ENCODE measurements at regions of chr17 and their contacts with region 1.

Region 1: DNA sequence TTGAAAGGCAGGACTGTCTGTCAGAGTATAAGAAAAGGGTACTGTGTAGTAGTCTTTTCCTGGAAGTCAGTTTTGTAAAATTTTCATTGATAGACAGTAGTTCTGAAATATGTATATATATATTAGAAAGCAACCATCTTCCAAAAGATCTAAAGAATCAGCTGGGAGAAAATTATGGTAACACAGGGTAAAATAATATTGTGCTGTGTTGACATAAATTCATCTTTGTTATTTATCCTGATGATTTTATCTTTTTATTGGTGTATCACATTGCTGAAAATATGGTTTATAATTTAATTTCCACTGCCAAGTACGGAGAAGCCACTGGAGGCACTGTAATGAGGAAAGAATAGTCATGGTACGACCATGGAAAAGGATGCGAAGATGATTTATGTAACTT is 324.9 kb downstream of the CA10 start:
- DNase-seq: no peak
- H3K4me3 ChIP-seq: no peak overlapping the region
- H3K27ac ChIP-seq: no peak overlapping the region
- H3K4me1 ChIP-seq: no peaks in the 10 kb centered on the region
- H3K27me3 ChIP-seq: no peaks in the 10 kb centered on the region
- CTCF ChIP-seq: no peak

Region 2: DNA sequence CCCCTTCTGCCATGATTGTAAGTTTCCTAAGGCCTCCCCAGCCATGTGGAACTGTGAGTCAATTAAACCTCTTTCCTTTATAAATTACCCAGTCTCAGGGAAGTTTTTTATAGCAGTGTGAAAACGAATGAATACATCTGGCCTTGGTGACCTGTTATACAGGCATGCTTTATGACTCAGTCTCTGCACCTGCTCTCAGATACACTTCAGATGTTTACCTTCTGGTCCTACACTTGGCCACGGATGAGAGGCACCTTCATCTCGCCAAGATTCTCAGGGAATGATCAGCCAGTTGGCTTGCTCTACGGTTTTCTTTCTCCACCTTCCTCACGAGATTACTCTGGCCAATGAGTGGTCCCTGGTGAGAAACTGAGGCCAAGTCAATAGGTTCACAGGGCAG is 20.2 kb after region 1 on chr17:
- CTCF ChIA-PET with region 1: no interaction called
- POLR2A ChIA-PET with region 1: no interaction called
- intact Hi-C with region 1: loop called (anchors 1 kb)
- DNase-seq: no peak
- H3K4me3 ChIP-seq: no peak overlapping the region
- H3K27ac ChIP-seq: no peak overlapping the region
- H3K4me1 ChIP-seq: no peaks in the 10 kb centered on the region
- H3K27me3 ChIP-seq: no peaks in the 10 kb centered on the region
- CTCF ChIP-seq: no peak

Region 3: GRCh38 chr17:51921500-51921899 is 87.9 kb after region 1 on chr17:
- CTCF ChIA-PET with region 1: no interaction called
- POLR2A ChIA-PET with region 1: no interaction called
- intact Hi-C with region 1: no loop called
- DNase-seq: no peak
- H3K4me3 ChIP-seq: no peak overlapping the region
- H3K27ac ChIP-seq: no peak overlapping the region
- H3K4me1 ChIP-seq: no peaks in the 10 kb centered on the region
- H3K27me3 ChIP-seq: no peaks in the 10 kb centered on the region
- CTCF ChIP-seq: no peak

Measured in A673 (cell line).